Gastrocnemius medialis (tissue), 4 donors: ENCODE measurements at regions of chr9 and their contacts with region 1.

Region 1: DNA sequence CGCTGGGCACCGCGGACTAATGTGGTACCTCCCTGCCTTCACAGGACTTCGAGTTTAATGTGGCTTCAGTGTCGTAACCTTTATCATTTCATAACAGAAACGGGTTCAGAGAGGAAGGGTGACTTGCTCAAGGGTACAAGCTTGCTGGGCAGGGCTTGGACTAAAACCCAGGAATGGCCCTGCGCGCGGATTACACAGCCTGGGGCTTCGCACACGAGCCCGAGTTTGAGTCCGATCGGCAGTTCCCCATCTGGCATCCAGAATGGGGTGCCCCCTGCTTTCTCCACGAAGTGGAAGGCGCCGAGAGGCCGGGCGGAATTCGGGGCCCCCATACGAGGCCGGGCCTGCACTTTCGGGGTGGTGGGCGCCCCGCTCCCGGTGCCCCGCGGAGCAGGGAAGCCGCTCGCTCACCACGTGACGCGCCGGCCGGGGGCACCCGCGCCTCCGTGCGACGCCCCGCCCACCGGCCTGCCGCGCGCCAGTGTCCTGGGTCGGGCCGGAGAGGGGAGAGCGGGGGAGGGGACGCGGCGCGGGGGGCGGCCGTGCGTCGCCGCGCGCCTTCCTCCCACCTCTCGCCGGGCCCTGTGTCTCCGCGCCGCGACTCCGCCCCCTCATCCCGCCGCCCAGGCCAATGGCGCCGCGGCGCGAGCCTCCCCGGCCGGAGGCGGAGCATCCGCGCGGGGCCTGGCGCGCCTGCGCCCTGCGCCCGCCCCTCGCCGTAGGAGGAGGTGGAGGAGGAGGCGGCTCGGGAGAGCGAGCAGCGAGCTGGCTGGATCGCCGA is at the start of gene SET:
- DNase-seq: peak; percentile 89 to 94
- ATAC-seq: peak; percentile 87 to 89
- H3K4me3 ChIP-seq: peak within 1 kb of the TSS; percentile 71 to 90 (median 83)
- H3K27ac ChIP-seq: peak within 1 kb of the TSS; percentile 90 to 98 (median 96)
- H3K4me1 ChIP-seq: peaks cover 12 to 19% of the 10 kb centered on the region in 2 donors
- H3K27me3 ChIP-seq: no peaks in the 10 kb centered on the region
- CTCF ChIP-seq: peak in 1 of 5 experiments; percentile 24
- POLR2A ChIP-seq: peak; percentile 99 to 100
- total RNA-seq, gene SET: 102 to 191 (median 170) TPM

Region 2: GRCh38 chr9:128438343-128439109 is 250.2 kb before region 1 on chr9:
- in situ Hi-C with region 1: no loop called
- intact Hi-C with region 1: no loop called
- DNase-seq: peak; percentile 61 to 68
- ATAC-seq: peak; percentile 87 to 95
- H3K4me3 ChIP-seq: no peak overlapping the region
- H3K27ac ChIP-seq: no peak overlapping the region
- H3K4me1 ChIP-seq: no peaks in the 10 kb centered on the region
- H3K27me3 ChIP-seq: no peaks in the 10 kb centered on the region
- CTCF ChIP-seq: peak; percentile 68 to 93 (median 89)
- POLR2A ChIP-seq: no peak

Region 3: GRCh38 chr9:128540634-128541360 is 147.9 kb before region 1 on chr9:
- in situ Hi-C with region 1: no loop called
- intact Hi-C with region 1: no loop called
- DNase-seq: no peak
- ATAC-seq: peak; percentile 12 to 62
- H3K4me3 ChIP-seq: no peak overlapping the region
- H3K27ac ChIP-seq: no peak overlapping the region
- H3K4me1 ChIP-seq: no peaks in the 10 kb centered on the region
- H3K27me3 ChIP-seq: no peaks in the 10 kb centered on the region
- CTCF ChIP-seq: no peak
- POLR2A ChIP-seq: no peak

Region 4: GRCh38 chr9:128552153-128552743 is 136.5 kb before region 1 on chr9 and contains the start of gene SPTAN1:
- in situ Hi-C with region 1: no loop called
- intact Hi-C with region 1: loop called (anchors 1 kb)
- DNase-seq: peak; percentile 69 to 76
- ATAC-seq: peak; percentile 88 to 94
- H3K4me3 ChIP-seq: peak within 1 kb of the TSS; percentile 74 to 100 (median 91)
- H3K27ac ChIP-seq: peak within 1 kb of the TSS; percentile 77 to 97 (median 92)
- H3K4me1 ChIP-seq: peaks cover 45 to 49% of the 10 kb centered on the region in 2 donors
- H3K27me3 ChIP-seq: no peaks in the 10 kb centered on the region
- CTCF ChIP-seq: peak in 3 of 5 experiments; percentile 17 to 28 (median 26)
- POLR2A ChIP-seq: peak; percentile 98 to 99
- total RNA-seq, gene SPTAN1: 30.2 to 41.5 (median 33.0) TPM

Region 5: DNA sequence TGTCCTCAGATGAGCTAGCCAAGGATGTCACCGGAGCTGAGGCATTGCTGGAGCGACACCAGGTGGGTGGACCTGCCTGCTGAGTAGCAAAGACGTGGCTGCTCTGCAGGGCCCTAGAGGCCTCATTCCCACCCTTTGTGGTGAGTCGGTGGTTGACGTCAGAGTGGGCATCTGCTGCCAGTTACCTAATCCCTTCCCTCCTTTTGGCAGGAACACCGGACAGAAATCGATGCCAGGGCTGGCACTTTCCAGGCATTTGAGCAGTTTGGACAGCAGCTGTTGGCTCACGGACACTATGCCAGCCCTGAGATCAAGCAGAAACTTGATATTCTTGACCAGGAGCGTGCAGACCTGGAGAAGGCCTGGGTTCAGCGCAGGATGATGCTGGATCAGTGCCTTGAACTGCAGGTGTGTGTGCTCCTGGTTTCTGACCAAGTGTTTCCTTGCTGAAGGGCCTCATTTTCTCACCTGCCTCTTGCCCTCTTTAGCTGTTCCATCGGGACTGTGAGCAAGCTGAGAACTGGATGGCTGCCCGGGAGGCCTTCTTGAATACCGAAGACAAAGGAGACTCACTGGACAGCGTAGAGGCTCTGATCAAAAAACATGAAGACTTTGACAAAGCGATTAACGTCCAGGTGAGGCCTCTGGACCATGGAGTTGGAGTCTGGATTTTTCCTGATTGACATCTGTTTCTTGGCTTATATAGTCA is 80.9 kb before region 1 on chr9:
- in situ Hi-C with region 1: no loop called
- intact Hi-C with region 1: loop called (anchors 2 kb)
- DNase-seq: peak; percentile 88 to 98
- ATAC-seq: peak; percentile 98 to 99
- H3K4me3 ChIP-seq: no peak overlapping the region
- H3K27ac ChIP-seq: peak overlapping the region; percentile 73 to 83 (median 76)
- H3K4me1 ChIP-seq: peaks cover 14 to 15% of the 10 kb centered on the region in 2 donors
- H3K27me3 ChIP-seq: no peaks in the 10 kb centered on the region
- CTCF ChIP-seq: no peak
- POLR2A ChIP-seq: no peak

Region 6: GRCh38 chr9:128656416-128657343 is 32.0 kb before region 1 on chr9 and contains the start of gene DYNC2I2:
- in situ Hi-C with region 1: no loop called
- intact Hi-C with region 1: loop called (anchors 1 kb)
- DNase-seq: peak; percentile 94
- ATAC-seq: peak; percentile 99
- H3K4me3 ChIP-seq: peak within 1 kb of the TSS; percentile 48 to 83 (median 71)
- H3K27ac ChIP-seq: peak within 1 kb of the TSS; percentile 92 to 100 (median 94)
- H3K4me1 ChIP-seq: no peaks in the 10 kb centered on the region
- H3K27me3 ChIP-seq: no peaks in the 10 kb centered on the region
- CTCF ChIP-seq: peak in 1 of 5 experiments; percentile 9
- POLR2A ChIP-seq: peak; percentile 20 to 29
- total RNA-seq, gene DYNC2I2: 11.4 to 29.1 (median 21.1) TPM

Region 7: GRCh38 chr9:128702445-128702948 is 13.8 kb after region 1 on chr9 and contains the start of gene PKN3:
- in situ Hi-C with region 1: no loop called
- intact Hi-C with region 1: loop called (anchors 1 kb)
- DNase-seq: peak; percentile 57 to 69
- ATAC-seq: peak; percentile 86 to 91
- H3K4me3 ChIP-seq: peak within 1 kb of the TSS; percentile 62 to 89 (median 76)
- H3K27ac ChIP-seq: peak within 1 kb of the TSS; percentile 69 to 79 (median 74)
- H3K4me1 ChIP-seq: peaks cover 0 to 11% of the 10 kb centered on the region in 2 donors
- H3K27me3 ChIP-seq: no peaks in the 10 kb centered on the region
- CTCF ChIP-seq: peak; percentile 66 to 91 (median 85)
- POLR2A ChIP-seq: no peak
- total RNA-seq, gene PKN3: 1.4 to 5.2 (median 3.3) TPM

Region 8: DNA sequence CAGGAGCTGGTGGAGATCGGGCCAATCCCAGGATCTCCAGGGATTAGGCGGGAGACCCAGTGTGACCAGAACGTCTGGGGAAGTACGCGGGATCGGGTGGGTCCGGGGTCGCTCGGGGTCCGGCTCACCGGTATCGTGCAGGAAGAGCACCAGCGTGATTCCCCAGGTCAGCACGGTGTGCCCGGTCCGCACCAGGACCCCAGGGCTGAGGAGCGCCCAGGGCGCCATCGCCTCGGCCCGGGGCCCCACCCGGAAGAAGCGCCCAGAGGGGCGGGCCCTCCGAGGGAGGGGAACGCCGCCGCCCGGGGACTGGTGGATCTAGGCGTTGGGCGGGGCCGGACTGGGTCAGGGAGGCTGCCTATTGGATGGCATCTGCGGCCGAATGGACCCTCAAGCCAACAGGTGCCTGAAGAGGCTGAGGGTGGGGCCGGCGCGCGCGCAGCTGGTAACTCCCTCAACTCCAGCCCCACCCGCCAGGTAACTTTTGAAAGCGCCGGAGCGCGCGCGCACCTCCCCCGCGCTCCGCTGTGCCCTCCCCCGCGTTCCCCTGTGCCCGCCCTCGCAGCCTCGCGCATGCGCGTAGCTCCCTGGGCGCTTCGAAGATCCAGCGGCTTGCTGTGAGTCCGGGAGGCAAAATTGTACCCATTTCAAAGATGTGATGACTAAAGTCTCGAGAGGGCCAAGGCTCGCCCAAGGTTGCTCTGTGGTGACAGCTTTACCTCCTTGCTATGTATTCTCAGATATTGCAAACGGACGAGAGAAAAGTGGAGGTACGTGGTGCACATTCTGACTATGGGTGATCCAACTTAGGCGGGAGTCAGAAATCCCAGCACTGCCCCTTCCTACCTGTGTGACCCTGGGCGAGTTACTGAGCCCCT is 35.4 kb after region 1 on chr9 and contains the start of gene ZDHHC12:
- in situ Hi-C with region 1: no loop called
- intact Hi-C with region 1: loop called (anchors 1 kb)
- DNase-seq: peak; percentile 92 to 98
- ATAC-seq: peak; percentile 90 to 93
- H3K4me3 ChIP-seq: peak within 1 kb of the TSS; percentile 62 to 85 (median 76)
- H3K27ac ChIP-seq: peak within 1 kb of the TSS; percentile 74 to 84 (median 80)
- H3K4me1 ChIP-seq: peaks cover 0 to 8% of the 10 kb centered on the region in 2 donors
- H3K27me3 ChIP-seq: no peaks in the 10 kb centered on the region
- CTCF ChIP-seq: no peak
- POLR2A ChIP-seq: peak; percentile 52 to 81
- total RNA-seq, gene ZDHHC12: 8.9 to 37.3 (median 31.0) TPM